ENCODE measurements at regions of chr6 and their contacts with region 1.

Region 1: DNA sequence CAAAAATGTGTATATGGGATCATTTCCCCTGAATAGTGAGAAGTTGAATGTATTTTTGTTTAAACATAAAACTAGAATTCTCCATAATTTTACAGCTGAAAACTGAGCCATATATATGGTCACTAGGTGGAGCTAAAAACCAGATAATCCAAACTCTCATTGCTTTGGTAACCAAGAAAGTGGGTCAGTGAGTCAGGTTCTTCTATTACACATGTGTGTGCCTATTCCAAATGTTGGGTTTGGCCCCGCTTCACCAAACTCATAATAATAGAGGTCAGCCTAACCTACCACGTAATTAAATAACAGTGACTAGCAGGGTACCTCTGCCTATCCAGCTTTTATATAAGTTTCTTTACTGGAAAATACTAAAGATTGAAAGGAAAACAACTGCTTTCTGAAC is 19.3 kb upstream of the RNGTT start:
- DNase-seq: peak; percentile 33
- H3K4me3 Mint-ChIP-seq: no peak overlapping the region
- H3K27ac Mint-ChIP-seq: no peak overlapping the region
- H3K4me1 Mint-ChIP-seq: no peaks in the 10 kb centered on the region
- H3K27me3 Mint-ChIP-seq: no peaks in the 10 kb centered on the region

Region 2: DNA sequence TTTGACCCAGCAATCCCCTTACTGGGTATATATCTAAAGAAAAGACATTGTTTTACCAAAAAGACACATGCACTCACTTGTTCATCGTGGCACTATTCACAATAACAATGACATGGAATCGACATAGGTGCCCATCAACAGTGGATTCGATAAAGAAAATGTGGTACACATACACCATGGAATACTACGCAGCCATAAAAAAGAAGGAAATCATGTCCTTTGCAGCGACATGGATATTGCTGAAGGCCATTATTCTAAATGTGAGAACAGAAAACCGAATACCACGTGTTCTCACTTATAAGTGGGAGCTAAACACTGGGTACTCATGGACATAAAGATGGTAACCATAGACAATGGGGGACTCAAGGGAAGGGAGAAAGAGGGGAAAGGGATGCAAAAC is 241.6 kb before region 1 on chr6:
- CTCF ChIA-PET with region 1: no interaction called
- POLR2A ChIA-PET with region 1: no interaction called
- intact Hi-C with region 1: no loop called
- DNase-seq: no peak
- H3K4me3 Mint-ChIP-seq: no peak overlapping the region
- H3K27ac Mint-ChIP-seq: no peak overlapping the region
- H3K4me1 Mint-ChIP-seq: no peaks in the 10 kb centered on the region
- H3K27me3 Mint-ChIP-seq: no peaks in the 10 kb centered on the region

Region 3: DNA sequence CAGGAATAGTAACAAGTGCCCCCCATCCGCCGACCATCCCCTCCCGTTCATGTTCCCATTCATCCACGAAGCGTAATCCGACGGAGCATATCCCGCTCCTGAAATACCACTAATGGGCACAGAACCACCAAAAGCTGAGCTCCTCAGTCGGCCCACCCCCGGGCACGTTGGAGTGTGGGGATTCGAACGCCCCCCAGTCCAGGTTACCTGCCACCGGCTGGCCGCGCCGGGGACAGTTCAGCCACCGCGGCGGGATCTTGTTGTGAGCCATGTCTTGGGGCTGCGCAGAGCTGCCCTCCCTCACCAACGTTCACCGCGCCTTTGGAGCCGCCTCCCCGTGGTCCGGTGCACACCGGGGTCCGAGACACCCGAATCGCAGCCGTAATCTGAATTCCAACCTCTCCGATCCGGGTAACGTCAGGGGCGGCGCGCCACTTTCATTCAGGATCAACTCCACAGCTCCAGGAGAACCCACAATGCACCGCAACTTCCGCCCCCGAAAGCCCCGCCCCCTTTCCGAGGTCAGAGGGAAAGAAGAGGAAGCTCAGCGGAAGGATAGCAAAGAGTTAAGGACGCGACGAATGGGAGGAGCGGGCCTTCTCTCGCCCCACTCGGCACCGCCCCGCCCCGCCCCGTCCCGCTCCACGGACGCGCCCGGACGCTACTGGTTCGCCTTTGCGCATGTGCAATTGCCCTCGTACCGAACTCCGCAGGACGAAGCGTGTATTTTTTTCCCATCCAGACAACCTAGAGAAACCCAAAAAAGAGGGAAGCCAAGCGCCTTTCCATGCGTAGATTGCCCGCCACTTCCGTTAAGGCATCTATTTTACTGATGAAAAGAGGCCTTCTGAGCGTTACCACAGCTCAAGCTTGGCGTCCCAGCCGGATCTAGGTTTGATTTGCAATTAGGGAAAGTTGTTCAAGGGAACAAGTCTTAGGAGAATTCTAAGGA is 19.3 kb before region 1 on chr6 and contains the start of gene RNGTT:
- CTCF ChIA-PET with region 1: interaction called, 6 read pairs
- POLR2A ChIA-PET with region 1: interaction called, 3 read pairs
- intact Hi-C with region 1: loop called (anchors 1 kb)
- DNase-seq: peak; percentile 99
- H3K4me3 Mint-ChIP-seq: peak within 1 kb of the TSS; percentile 96
- H3K27ac Mint-ChIP-seq: peak within 1 kb of the TSS; percentile 84
- H3K4me1 Mint-ChIP-seq: peaks cover 39% of the 10 kb centered on the region
- H3K27me3 Mint-ChIP-seq: no peaks in the 10 kb centered on the region
- total RNA-seq, gene RNGTT: 21.3 to 22.0 TPM

Region 4: GRCh38 chr6:89145787-89146646 is 163.3 kb after region 1 on chr6 and contains the start of gene PM20D2:
- CTCF ChIA-PET with region 1: interaction called, 25 read pairs
- POLR2A ChIA-PET with region 1: no interaction called
- intact Hi-C with region 1: loop called (anchors 2 kb)
- DNase-seq: peak; percentile 71
- H3K4me3 Mint-ChIP-seq: peak within 1 kb of the TSS; percentile 85
- H3K27ac Mint-ChIP-seq: peak within 1 kb of the TSS; percentile 95
- H3K4me1 Mint-ChIP-seq: peaks cover 37% of the 10 kb centered on the region
- H3K27me3 Mint-ChIP-seq: no peaks in the 10 kb centered on the region
- total RNA-seq, gene PM20D2: 8.4 to 8.9 TPM

Region 5: DNA sequence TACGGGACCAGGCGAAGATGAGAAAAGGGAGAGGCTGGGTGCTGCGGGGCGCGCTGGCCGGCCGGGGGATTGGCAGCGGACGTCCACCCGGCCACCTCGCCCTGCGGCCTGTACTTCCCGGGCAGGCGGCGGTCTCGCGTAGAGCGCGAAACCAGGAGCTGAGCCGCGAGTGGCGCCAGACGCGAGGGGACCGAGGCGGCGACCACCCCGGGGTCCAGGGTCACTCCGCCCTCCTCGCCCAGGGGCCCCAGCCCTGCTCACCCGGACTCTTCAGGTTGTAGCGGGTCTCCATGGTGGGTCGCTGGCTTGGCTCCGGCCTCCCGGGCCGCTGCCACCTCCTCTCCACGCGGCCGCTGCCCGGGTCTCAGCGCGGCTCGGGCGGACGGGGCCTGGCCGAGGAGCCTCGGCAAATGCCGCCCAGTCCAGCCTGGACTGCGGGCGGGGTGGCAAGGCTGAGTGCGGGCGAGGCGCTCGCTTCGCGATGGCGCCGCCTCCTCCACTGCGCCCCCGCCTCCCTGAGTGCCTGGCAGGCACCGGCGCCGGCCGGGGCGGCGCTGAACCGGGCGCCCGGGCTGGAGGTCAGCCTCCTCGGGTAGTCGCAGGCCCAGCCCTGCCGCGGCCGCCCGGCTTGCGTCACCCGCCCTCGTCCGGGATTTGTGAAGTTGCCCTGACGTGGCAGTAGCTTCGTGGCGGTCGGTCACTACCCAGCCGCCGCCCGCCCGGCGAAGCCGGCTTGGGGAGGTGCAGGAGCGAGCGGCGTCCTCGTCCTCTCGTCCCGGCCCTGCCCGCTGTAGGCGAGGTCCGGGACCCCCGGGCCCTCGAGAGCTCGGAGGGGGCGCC is 369.8 kb after region 1 on chr6 and contains the start of gene UBE2J1:
- CTCF ChIA-PET with region 1: interaction called, 3 read pairs
- POLR2A ChIA-PET with region 1: no interaction called
- intact Hi-C with region 1: loop called (anchors 5 kb)
- DNase-seq: peak; percentile 85
- H3K4me3 Mint-ChIP-seq: peak within 1 kb of the TSS; percentile 91
- H3K27ac Mint-ChIP-seq: peak within 1 kb of the TSS; percentile 84
- H3K4me1 Mint-ChIP-seq: peaks cover 75% of the 10 kb centered on the region
- H3K27me3 Mint-ChIP-seq: no peaks in the 10 kb centered on the region
- total RNA-seq, gene UBE2J1: 23.8 to 24.9 TPM

Region 6: DNA sequence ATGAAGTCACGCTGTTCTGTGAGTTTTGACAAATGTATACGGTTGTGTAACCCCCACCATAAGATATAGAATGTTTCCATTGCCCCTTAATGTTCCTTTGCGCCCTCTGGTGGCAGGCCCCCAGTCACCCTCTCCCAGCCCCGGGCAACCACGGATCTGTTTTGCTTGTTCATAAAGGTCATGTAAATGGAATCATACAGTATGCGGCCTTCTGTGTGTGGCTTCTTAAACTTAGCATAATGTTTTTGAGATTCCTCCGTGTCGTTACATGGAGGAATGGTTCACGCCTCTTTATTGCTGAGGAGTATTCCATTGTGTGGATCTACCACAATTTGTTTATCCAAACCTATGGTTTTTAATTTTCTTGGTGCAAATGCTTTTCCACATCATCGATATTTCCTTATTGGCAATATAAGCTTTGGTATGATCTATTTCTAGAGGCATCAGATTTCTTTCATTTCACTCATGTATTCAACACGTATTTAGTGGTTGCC is 627.5 kb after region 1 on chr6:
- CTCF ChIA-PET with region 1: interaction called, 6 read pairs
- POLR2A ChIA-PET with region 1: no interaction called
- intact Hi-C with region 1: loop called (anchors 1 kb)
- DNase-seq: peak; percentile 83
- H3K4me3 Mint-ChIP-seq: no peak overlapping the region
- H3K27ac Mint-ChIP-seq: no peak overlapping the region
- H3K4me1 Mint-ChIP-seq: no peaks in the 10 kb centered on the region
- H3K27me3 Mint-ChIP-seq: no peaks in the 10 kb centered on the region